Heart right ventricle (tissue), 16 donors: ENCODE measurements at regions of chr2 and their contacts with region 1.

Region 1: DNA sequence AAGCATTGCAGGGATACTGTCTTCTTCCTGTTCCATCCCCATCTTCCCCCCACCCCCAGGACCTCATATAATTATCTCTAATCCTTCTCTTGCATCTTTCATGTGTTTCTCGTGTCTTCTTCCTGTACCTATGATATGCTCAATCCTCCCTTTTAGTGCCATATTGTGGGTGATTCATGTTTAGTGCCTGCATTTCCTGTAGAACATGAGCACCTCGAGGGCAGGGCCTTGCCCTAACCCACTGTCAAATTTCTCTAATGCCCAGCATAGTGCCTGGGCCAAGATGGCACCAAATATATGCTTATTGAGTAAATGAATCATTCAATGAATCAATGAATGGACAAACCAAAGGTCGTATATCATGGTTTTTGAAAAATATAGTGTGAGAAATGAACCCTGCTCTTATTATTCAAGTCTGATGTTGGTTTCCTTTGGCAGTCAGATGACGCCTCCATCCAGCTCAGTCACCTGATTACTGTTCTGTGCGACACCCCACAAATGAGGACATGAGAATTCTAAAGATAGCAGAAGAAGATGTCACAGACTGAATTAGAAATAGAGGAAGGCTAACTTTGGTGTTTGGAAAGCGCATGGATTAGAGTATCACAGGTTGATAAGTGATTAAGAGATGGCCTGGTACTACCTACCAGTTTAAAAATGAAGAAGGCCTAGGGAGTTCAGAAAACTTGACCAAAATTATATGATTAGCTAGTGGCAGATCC is 278.4 kb downstream of the PRKCE start:
- DNase-seq: no peak
- ATAC-seq: peak in 1 of 8 donors; percentile 34
- H3K4me3 ChIP-seq: no peak overlapping the region
- H3K27ac ChIP-seq: peak overlapping the region; percentile 2 to 86 (median 80)
- H3K4me1 ChIP-seq: peaks cover 7 to 54% (median 35%) of the 10 kb centered on the region in 9 donors
- H3K27me3 ChIP-seq: no peaks in the 10 kb centered on the region
- CTCF ChIP-seq: no peak

Region 2: DNA sequence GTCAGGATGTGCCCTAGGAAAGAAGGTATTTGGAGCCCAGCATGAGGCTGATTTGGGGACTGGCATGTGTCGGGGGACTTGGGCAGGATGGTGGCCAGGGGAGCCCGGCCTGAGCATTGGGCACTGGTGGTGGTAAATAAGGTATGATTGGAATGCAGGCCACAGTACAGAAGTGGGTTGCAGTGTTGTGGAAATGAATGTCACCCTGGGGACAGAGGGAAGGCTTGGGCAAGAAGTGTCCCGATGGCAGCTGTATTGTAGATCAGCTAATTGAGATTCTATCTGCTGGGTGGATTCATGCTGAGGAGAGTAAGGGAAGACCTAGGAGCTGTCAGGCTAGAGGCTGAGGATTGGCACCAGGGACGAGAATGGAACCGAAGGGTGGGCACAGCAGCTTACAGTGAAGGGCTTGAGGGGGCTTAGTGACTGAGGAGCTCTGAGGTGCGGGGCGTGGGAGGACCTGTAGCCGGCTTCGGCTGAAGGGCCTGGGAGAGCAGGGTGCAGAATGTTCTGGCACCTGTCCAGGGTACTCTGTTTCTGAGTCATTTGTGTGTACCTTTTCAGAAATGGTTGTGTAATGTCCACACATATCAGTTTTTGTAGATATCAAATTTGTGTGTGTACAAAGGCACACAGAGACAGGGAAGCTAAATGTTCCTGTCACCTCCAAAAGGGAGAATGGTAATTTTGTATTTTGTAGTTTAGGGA is 108.1 kb before region 1 on chr2:
- intact Hi-C with region 1: loop called in 4 of 10 experiments (anchors 5 to 10 kb)
- DNase-seq: peak; percentile 26 to 27
- ATAC-seq: peak in 5 of 8 donors; percentile 13 to 67 (median 41)
- H3K4me3 ChIP-seq: no peak overlapping the region
- H3K27ac ChIP-seq: peak overlapping the region in 8 of 10 donors; percentile 5 to 61 (median 45)
- H3K4me1 ChIP-seq: peaks cover 12 to 67% (median 38%) of the 10 kb centered on the region in 9 donors
- H3K27me3 ChIP-seq: no peaks in the 10 kb centered on the region
- CTCF ChIP-seq: no peak

Region 3: GRCh38 chr2:45882707-45883602 is 46.9 kb before region 1 on chr2:
- intact Hi-C with region 1: loop called in 3 of 10 experiments (anchors 2 to 5 kb)
- DNase-seq: peak; percentile 50 to 69
- ATAC-seq: peak; percentile 20 to 85 (median 74)
- H3K4me3 ChIP-seq: no peak overlapping the region
- H3K27ac ChIP-seq: peak overlapping the region in 7 of 10 donors; percentile 15 to 67 (median 52)
- H3K4me1 ChIP-seq: peaks cover 24 to 66% (median 56%) of the 10 kb centered on the region in 9 donors
- H3K27me3 ChIP-seq: no peaks in the 10 kb centered on the region
- CTCF ChIP-seq: no peak